PC-3 (cell line): ENCODE measurements at regions of chr21 and their contacts with region 1.

Region 1: DNA sequence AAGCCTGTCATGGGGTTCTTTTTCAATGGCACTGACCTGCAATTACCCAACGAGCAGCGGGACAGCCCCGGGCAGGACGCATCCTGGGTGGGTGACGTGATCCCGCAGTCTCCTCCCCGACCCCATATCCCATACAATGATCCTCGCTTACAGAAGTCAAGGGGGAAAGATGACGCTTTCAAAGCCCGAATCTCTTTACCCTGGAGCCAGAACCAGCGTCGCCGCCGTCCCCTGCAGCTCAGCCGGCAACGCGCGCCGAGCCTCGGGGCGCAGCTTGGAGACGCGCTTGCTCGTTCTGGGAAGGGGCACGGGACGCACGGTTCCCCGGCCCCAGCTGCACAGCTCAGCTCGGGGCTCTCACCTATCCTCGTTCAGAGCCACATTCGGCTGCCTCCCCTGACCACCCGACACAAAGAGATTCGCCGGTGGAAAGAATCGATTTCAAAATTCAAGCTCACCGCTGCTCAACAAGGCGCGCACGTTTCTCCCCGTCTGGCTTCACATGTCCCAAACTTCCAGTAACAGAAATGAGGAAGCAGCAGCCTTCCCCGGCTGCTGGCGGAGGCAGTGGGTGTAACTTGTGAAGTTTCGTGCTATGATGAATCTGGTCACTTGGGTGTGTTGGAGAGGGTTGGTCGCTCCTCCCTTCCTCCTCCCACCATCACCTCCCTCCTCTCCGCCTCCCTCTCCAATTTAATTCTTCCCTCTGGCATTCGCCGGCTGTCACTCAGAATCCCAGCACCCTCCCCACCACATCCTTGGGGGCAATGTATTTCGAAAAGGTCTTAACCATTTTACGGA is at the start of gene TIAM1:
- DNase-seq: peak; percentile 89
- ATAC-seq: peak; percentile 91
- H3K4me3 ChIP-seq: peak within 1 kb of the TSS; percentile 85
- H3K27ac ChIP-seq: peak within 1 kb of the TSS; percentile 62
- H3K4me1 ChIP-seq: peaks cover 38% of the 10 kb centered on the region
- H3K27me3 ChIP-seq: no peaks in the 10 kb centered on the region
- CTCF ChIP-seq: no peak
- total RNA-seq, gene TIAM1: 19.1 and 21.1 TPM in 2 replicates

Region 2: DNA sequence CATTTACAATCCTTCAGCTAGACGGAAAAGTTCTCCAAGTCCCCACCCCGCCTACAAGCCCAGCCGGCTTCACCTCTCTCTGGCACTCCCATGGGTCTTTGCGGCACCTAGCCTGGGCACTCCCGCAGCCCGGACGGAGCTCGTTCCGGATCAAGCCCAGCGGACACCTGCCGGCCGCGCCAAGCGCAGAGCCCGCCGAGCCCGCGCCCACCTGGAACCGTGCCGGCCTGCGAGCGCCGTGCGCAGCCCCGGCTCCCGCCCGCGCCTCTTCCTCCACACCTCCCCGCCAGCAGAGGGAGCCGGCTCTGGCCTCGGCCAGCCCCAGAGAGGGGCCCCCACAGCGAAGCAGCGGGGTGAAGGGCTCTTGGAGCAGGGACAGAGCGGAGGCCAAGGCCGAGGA is 255.6 kb before region 1 on chr21:
- CTCF ChIA-PET with region 1: no interaction called
- POLR2A ChIA-PET with region 1: no interaction called
- intact Hi-C with region 1: no loop called
- DNase-seq: no peak
- ATAC-seq: no peak
- H3K4me3 ChIP-seq: no peak overlapping the region
- H3K27ac ChIP-seq: no peak overlapping the region
- H3K4me1 ChIP-seq: no peaks in the 10 kb centered on the region
- H3K27me3 ChIP-seq: peaks cover 15% of the 10 kb centered on the region; the same call in 1 of the 2 replicates
- CTCF ChIP-seq: no peak

Region 3: GRCh38 chr21:31107871-31108270 is 236.0 kb before region 1 on chr21:
- CTCF ChIA-PET with region 1: no interaction called
- POLR2A ChIA-PET with region 1: no interaction called
- intact Hi-C with region 1: loop called (anchors 10 kb)
- DNase-seq: no peak
- ATAC-seq: no peak
- H3K4me3 ChIP-seq: no peak overlapping the region
- H3K27ac ChIP-seq: no peak overlapping the region
- H3K4me1 ChIP-seq: no peaks in the 10 kb centered on the region
- H3K27me3 ChIP-seq: no peaks in the 10 kb centered on the region
- CTCF ChIP-seq: no peak

Region 4: GRCh38 chr21:31213795-31214194 is 130.1 kb before region 1 on chr21:
- CTCF ChIA-PET with region 1: no interaction called
- POLR2A ChIA-PET with region 1: interaction called, 20 read pairs
- intact Hi-C with region 1: no loop called
- DNase-seq: peak; percentile 46
- ATAC-seq: peak; percentile 56
- H3K4me3 ChIP-seq: no peak overlapping the region
- H3K27ac ChIP-seq: no peak overlapping the region
- H3K4me1 ChIP-seq: peaks cover 6% of the 10 kb centered on the region
- H3K27me3 ChIP-seq: no peaks in the 10 kb centered on the region
- CTCF ChIP-seq: no peak; the same call in 1 of the 2 replicates

Region 5: DNA sequence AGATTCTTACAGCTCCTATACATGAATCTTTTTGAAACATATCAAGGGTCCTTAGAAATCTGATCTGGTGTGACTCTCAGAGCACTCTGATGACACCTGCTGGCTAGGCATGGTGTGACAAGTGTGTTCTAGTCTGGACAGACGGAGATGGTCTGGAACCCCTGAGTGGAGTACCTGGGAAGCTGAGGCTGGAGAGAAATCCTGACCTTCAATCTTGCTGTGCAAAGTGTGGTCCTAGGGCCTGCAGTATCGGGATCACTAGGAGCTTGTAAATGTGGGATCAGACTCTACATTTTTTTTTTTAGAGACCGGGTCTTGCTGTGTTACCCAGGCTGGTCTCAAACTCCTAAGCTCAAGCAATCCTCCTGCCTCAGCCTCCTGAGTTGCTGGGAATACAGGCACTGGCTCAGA is 237.0 kb after region 1 on chr21:
- CTCF ChIA-PET with region 1: no interaction called
- POLR2A ChIA-PET with region 1: no interaction called
- intact Hi-C with region 1: loop called (anchors 1 kb)
- DNase-seq: peak; percentile 88
- ATAC-seq: peak; percentile 92
- H3K4me3 ChIP-seq: no peak overlapping the region
- H3K27ac ChIP-seq: no peak overlapping the region
- H3K4me1 ChIP-seq: no peaks in the 10 kb centered on the region
- H3K27me3 ChIP-seq: no peaks in the 10 kb centered on the region
- CTCF ChIP-seq: peak; percentile 89

Region 6: DNA sequence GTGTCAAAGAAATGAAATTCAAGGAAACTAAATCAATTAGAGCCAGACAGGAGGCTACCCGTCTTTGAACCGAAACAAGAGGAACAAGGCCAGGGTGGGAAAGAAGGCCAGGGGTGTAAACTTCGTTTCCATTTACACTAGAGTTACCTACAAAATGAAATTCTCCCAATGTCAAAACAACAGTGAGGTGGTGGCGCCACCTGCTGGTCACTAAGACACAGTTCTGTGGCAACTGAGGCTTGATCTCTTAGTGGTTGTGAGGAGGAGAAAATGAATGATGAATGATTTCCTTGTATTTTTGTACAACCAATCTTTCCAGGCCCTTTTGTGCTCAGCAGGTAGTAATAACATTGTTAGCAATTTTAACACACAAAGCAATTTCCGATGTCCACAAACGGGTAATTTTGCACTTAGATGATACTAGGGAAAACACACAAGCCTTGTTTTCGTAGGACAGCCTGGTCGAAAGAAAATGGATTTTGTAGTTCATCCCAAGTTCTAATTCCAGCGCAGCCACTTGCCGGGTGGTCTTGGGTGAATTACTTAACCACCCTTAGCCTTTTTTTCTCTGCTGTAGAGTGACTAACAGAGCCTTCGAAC is 260.8 kb after region 1 on chr21:
- CTCF ChIA-PET with region 1: no interaction called
- POLR2A ChIA-PET with region 1: no interaction called
- intact Hi-C with region 1: loop called (anchors 1 kb)
- DNase-seq: peak; percentile 87
- ATAC-seq: peak; percentile 91
- H3K4me3 ChIP-seq: no peak overlapping the region
- H3K27ac ChIP-seq: no peak overlapping the region
- H3K4me1 ChIP-seq: peaks cover 11% of the 10 kb centered on the region
- H3K27me3 ChIP-seq: no peaks in the 10 kb centered on the region
- CTCF ChIP-seq: peak; percentile 94